Mammary epithelial cell (primary cell): ENCODE measurements at regions of chr18 and their contacts with region 1.

Region 1: DNA sequence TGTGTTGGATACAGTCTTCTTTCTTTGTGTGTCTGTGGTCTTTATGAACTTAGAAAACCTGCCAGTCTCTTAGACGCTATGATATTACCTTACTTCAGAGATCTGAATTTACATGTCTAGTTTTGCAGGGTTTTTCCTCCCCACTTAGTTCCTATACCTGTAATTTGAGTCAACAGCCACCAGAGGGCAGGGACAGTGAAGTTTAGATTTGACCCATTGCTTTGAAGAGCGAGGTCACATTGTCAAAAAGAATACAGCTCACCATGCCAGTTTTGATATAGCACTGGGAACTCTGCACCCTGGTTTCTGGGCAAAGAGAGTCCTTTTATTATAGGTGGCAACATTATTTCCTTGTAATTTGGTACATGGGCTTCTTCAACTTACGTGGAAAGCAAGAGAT is 102.3 kb downstream of the MAPK4 start:
- DNase-seq: peak; percentile 5
- H3K4me3 ChIP-seq: no peak overlapping the region
- H3K27ac ChIP-seq: no peak overlapping the region
- H3K4me1 ChIP-seq: no peaks in the 10 kb centered on the region
- H3K27me3 ChIP-seq: no peaks in the 10 kb centered on the region
- CTCF ChIP-seq: peak; percentile 32 to 46

Region 2: DNA sequence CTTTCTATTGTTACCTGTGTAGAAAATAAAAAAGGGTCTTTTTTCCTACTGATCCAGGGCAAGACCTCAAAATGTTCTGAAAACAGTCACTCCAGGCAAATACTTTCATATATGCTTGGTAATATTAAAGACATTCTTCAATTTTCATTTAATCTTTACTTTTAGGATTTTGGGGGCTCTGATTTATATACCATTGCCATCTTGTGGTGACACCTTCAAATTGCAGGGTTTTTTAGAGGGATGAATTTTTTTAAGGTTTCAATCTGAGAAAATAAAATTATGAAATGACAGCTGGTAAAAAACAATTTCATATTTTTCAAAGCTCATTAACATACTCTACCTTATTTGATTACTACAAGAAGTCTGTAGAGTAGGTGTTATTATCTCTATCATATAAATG is 75.5 kb before region 1 on chr18:
- CTCF ChIA-PET with region 1: interaction called, 5 read pairs
- dilution Hi-C with region 1: loop called (anchors 5 kb)
- in situ Hi-C with region 1: no loop called
- intact Hi-C with region 1: no loop called
- DNase-seq: no peak
- H3K4me3 ChIP-seq: no peak overlapping the region
- H3K27ac ChIP-seq: no peak overlapping the region
- H3K4me1 ChIP-seq: no peaks in the 10 kb centered on the region
- H3K27me3 ChIP-seq: no peaks in the 10 kb centered on the region
- CTCF ChIP-seq: peak; percentile 33 to 43

Region 3: DNA sequence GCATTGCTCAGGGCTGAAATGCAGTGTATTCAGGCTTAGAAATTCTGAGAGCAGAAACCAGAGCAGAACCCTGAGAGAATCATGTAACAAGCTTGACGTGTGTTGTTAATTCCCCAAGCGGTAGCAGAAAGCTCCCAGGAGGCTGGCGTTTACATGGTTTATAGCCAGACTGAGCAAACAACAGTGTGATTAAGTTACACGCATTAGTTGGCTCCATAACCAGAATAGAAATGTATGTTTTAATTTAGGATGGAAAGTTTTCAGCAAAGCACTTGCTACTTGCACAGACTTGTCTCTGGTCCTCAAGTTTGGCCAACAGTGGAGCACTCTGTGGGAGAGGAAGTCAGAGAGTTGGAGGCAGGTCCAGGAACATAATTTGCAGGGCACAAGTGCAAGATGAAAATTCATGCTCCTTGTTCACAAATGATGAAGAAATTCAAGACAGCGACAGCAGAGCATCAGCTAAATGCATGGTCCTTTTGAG is 33.0 kb before region 1 on chr18:
- CTCF ChIA-PET with region 1: no interaction called
- dilution Hi-C with region 1: loop called (anchors 5 kb)
- in situ Hi-C with region 1: no loop called
- intact Hi-C with region 1: no loop called
- DNase-seq: peak; percentile 78
- H3K4me3 ChIP-seq: no peak overlapping the region
- H3K27ac ChIP-seq: no peak overlapping the region
- H3K4me1 ChIP-seq: peaks cover 46% of the 10 kb centered on the region
- H3K27me3 ChIP-seq: no peaks in the 10 kb centered on the region
- CTCF ChIP-seq: no peak